ENCODE measurements at regions of chr16 and their contacts with region 1.

Region 1: DNA sequence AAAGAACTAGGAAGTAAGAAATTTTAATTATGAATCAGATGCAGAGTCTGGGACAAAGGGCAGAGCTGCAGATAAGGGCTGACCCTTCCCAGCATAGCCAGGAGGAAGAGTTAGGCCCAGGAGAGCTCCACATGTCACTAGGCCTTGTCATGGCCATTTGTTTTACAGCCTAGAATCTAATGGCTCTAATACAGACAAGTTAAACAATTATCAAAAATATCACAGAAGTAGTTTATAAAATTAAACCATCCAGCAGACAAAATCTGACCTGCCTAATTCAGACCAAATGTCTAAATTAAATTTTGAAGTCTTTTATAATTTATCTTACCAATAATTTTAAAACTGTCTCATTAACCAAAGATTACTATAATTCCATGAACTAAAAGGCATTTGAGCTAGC is 1369.5 kb downstream of the CDH11 start:
- DNase-seq: no peak
- H3K4me3 Mint-ChIP-seq: no peak overlapping the region
- H3K27ac Mint-ChIP-seq: no peak overlapping the region
- H3K4me1 Mint-ChIP-seq: no peaks in the 10 kb centered on the region
- H3K27me3 Mint-ChIP-seq: no peaks in the 10 kb centered on the region

Region 2: GRCh38 chr16:63602206-63602927 is 150.0 kb before region 1 on chr16:
- CTCF ChIA-PET with region 1: no interaction called
- intact Hi-C with region 1: no loop called
- DNase-seq: no peak
- H3K4me3 Mint-ChIP-seq: no peak overlapping the region
- H3K27ac Mint-ChIP-seq: no peak overlapping the region
- H3K4me1 Mint-ChIP-seq: no peaks in the 10 kb centered on the region
- H3K27me3 Mint-ChIP-seq: no peaks in the 10 kb centered on the region

Region 3: GRCh38 chr16:63663152-63663551 is 89.2 kb before region 1 on chr16:
- CTCF ChIA-PET with region 1: no interaction called
- intact Hi-C with region 1: no loop called
- DNase-seq: no peak
- H3K4me3 Mint-ChIP-seq: no peak overlapping the region
- H3K27ac Mint-ChIP-seq: no peak overlapping the region
- H3K4me1 Mint-ChIP-seq: no peaks in the 10 kb centered on the region
- H3K27me3 Mint-ChIP-seq: no peaks in the 10 kb centered on the region

Region 4: GRCh38 chr16:63816276-63816675 is 63.9 kb after region 1 on chr16:
- CTCF ChIA-PET with region 1: no interaction called
- intact Hi-C with region 1: loop called (anchors 10 kb)
- DNase-seq: no peak
- H3K4me3 Mint-ChIP-seq: no peak overlapping the region
- H3K27ac Mint-ChIP-seq: no peak overlapping the region
- H3K4me1 Mint-ChIP-seq: no peaks in the 10 kb centered on the region
- H3K27me3 Mint-ChIP-seq: no peaks in the 10 kb centered on the region